OCI-LY7 (cell line): ENCODE measurements at regions of chr5 and their contacts with region 1.

Region 1: DNA sequence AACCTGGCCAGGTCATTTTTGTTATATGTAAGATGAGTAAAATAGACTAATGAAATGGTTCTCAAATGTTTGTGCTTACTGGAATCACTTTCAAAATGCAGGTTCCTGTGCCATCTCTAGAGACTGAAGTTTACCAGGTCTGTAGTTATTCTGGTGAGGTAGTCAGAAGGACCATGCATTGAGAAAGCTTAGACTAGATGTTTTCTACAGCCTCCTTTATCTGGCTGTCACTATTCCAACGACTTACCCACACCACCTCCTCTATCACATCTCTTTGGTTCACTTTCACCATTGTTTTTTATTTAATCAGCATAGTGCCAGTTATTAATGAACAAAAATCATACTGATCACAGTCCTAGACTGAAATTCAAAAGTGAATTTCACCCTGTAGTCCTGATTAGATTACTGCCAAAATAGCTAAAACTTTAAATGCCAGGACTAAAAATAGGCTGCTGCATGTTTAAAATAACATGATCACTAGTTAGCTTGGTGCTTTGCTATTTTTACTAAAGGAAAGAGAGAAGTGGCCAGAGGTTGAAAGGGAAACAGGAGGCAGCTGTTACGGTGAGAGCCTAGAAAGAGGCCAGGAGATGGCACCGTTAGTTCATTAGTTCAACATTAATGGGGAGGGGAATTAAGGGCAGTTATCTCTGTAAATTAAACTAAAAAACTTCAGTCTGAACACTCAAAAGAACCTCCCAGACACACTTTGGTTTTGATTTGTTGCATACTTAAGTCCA is 13.9 kb upstream of the FNIP1 start:
- DNase-seq: peak; percentile 13
- H3K4me3 ChIP-seq: no peak overlapping the region
- H3K27ac ChIP-seq: no peak overlapping the region
- H3K4me1 ChIP-seq: no peaks in the 10 kb centered on the region
- CTCF ChIP-seq: peak; percentile 57

Region 2: GRCh38 chr5:132007399-132008165 is 196.9 kb after region 1 on chr5:
- CTCF ChIA-PET with region 1: no interaction called
- POLR2A ChIA-PET with region 1: no interaction called
- intact Hi-C with region 1: loop called (anchors 2 kb)
- DNase-seq: peak; percentile 82
- H3K4me3 ChIP-seq: no peak overlapping the region
- H3K27ac ChIP-seq: no peak overlapping the region
- H3K4me1 ChIP-seq: no peaks in the 10 kb centered on the region
- CTCF ChIP-seq: peak; percentile 87